ENCODE measurements at regions of chr1 and their contacts with region 1.

Region 1: DNA sequence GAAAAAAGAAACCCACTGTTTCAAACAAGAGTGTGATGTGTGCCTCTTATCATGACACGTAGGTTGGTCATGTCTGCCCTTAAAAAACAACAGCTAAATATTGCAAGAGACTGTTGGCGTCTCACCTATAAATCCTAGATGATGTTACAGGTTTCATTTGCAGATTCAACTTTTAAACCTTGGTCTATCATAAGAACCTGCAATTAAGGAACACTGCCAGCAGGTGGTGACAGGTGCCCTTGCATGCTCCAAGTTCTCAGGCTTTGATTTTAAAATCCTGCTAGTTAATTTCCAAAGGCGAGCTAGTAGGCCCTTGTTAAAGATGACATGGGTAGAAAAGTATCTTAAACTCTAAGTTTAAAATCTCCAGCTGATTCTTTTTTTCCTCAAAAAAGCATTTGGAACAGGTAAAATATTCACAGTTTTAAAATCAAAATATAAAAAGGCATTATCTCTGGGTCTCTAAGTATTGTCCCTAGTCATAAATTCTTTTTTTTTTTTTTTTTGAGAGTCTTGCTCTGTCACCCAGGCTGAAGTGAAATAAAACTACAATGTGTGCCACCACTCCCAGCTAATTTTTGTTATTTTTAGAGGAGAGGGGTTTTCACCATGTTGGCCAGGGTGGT is 39.1 kb downstream of the CLSTN1 start:
- DNase-seq: peak in 1 of 2 donors; percentile 46
- H3K4me3 ChIP-seq: no peak overlapping the region
- H3K27ac ChIP-seq: no peak overlapping the region
- H3K4me1 ChIP-seq: no peaks in the 10 kb centered on the region
- H3K27me3 ChIP-seq: no peaks in the 10 kb centered on the region
- CTCF ChIP-seq: peak; percentile 55 to 83 (median 74)
- POLR2A ChIP-seq: no peak

Region 2: DNA sequence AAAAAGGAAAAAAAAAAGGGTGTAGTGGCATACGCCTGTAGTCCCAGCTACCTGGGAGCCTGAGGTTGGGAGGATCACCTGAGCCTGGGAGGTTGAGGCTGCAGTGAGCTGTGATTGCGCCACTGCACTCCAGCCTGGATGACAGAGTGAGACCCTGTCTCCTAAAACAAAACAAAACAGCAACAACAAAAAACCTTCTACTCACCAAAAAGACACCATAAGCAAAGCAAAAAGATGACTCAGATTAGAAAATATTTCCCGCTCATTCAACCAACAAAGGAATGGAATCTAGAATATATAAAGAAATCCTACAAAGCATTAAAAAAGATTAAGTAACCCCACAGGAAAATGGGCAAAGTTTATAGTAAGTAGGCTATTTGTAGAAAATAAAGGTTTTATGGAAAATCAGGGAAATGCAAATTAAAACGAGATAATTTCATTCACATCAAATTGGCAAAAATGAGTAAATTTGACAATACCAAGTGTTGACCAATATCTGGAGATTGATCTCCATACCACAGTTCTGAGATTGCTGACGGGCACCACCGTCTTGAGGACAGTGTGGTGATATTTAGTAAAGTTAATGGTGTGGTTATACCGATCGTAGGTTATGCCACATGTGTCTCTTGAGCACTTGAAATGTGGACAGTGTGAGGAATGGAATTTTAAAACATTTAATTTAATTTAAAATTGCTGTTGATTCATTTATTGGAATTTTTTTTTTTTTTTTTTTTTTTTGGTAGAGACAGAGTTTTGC is 79.1 kb before region 1 on chr1:
- intact Hi-C with region 1: no loop called
- DNase-seq: no peak
- H3K4me3 ChIP-seq: no peak overlapping the region
- H3K27ac ChIP-seq: no peak overlapping the region
- H3K4me1 ChIP-seq: no peaks in the 10 kb centered on the region
- H3K27me3 ChIP-seq: no peaks in the 10 kb centered on the region
- CTCF ChIP-seq: no peak
- POLR2A ChIP-seq: no peak

Region 3: GRCh38 chr1:9867408-9868243 is 83.0 kb after region 1 on chr1:
- intact Hi-C with region 1: loop called (anchors 10 kb)
- DNase-seq: peak; percentile 77 to 82
- H3K4me3 ChIP-seq: no peak overlapping the region
- H3K27ac ChIP-seq: no peak overlapping the region
- H3K4me1 ChIP-seq: peaks cover 0 to 11% of the 10 kb centered on the region in 2 donors
- H3K27me3 ChIP-seq: no peaks in the 10 kb centered on the region
- CTCF ChIP-seq: peak; percentile 80 to 95 (median 92)
- POLR2A ChIP-seq: no peak